ENCODE measurements at regions of chr7 and their contacts with region 1.

Region 1: GRCh38 chr7:100049441-100050311 is at the start of gene ZSCAN21:
- DNase-seq: peak; percentile 85
- H3K4me3 Mint-ChIP-seq: peak within 1 kb of the TSS; percentile 85
- H3K27ac Mint-ChIP-seq: peak within 1 kb of the TSS; percentile 91
- H3K4me1 Mint-ChIP-seq: peaks cover 17% of the 10 kb centered on the region
- H3K27me3 Mint-ChIP-seq: no peaks in the 10 kb centered on the region
- total RNA-seq, gene ZSCAN21: 6.2 to 6.4 TPM

Region 2: GRCh38 chr7:99997545-99998137 is 52.0 kb before region 1 on chr7:
- CTCF ChIA-PET with region 1: interaction called, 19 read pairs
- intact Hi-C with region 1: loop called (anchors 1 kb)
- DNase-seq: peak; percentile 78
- H3K4me3 Mint-ChIP-seq: peak overlapping the region; percentile 69
- H3K27ac Mint-ChIP-seq: peak overlapping the region; percentile 78
- H3K4me1 Mint-ChIP-seq: peaks cover 10% of the 10 kb centered on the region
- H3K27me3 Mint-ChIP-seq: no peaks in the 10 kb centered on the region

Region 3: DNA sequence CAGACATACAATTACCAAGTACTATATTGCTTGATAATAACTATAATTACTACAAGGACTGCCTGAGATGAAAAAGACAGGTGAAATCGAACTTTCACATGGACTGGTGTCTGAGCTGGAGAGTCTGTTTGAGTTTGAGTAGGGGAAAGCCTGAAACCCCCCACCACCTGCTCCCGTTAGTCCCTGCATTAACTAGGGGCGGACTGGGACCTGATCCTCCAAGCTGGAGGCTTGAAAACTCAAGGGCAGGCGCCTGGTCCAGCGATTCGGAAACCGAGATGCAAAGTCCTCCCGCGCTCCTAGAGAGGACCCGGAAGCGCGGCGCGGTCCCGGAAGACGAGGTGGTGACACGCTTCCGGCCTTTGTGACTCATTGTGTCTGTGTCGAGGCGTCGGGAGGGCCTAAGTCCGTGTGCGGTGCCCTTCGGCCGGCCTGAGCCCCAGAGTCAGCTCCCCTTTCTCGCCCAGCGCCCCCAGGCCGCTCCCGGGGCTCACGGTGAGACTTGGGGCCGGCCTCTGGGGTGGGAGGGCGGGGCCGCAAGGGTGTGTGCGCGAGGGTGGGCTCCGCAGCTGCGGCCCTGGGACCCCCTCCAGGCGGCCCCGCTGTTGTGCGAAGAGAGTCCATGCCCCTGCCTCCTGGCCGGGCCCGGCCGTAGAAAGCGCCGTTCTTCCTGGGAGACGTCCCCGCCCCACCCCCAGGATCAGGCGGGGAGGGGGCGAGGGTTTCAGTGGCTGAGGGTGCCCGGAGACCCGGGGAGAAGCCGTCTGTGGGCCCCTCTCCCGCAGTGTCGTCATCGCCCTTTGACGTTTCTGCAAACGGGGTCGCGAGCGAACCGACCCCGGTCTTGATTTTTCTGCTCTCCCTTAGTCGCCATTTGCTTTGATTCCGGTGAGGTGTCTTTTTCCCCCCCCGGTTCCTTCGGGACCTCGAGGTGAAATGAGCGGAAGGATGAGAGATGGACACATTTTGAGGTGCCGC is 34.2 kb before region 1 on chr7 and contains the start of gene ZKSCAN1:
- CTCF ChIA-PET with region 1: interaction called, 7 read pairs
- intact Hi-C with region 1: loop called (anchors 1 kb)
- DNase-seq: peak; percentile 89
- H3K4me3 Mint-ChIP-seq: peak within 1 kb of the TSS; percentile 88
- H3K27ac Mint-ChIP-seq: peak within 1 kb of the TSS; percentile 91
- H3K4me1 Mint-ChIP-seq: peaks cover 64% of the 10 kb centered on the region
- H3K27me3 Mint-ChIP-seq: no peaks in the 10 kb centered on the region
- total RNA-seq, gene ZKSCAN1: 64.4 to 67.9 TPM

Region 4: GRCh38 chr7:100126931-100127865 is 77.5 kb after region 1 on chr7 and contains the start of gene MBLAC1:
- CTCF ChIA-PET with region 1: interaction called, 3 read pairs
- intact Hi-C with region 1: loop called (anchors 2 kb)
- DNase-seq: peak; percentile 94
- H3K4me3 Mint-ChIP-seq: peak within 1 kb of the TSS; percentile 100
- H3K27ac Mint-ChIP-seq: peak within 1 kb of the TSS; percentile 99
- H3K4me1 Mint-ChIP-seq: peaks cover 30% of the 10 kb centered on the region
- H3K27me3 Mint-ChIP-seq: no peaks in the 10 kb centered on the region
- total RNA-seq, gene MBLAC1: 2.3 to 2.9 TPM

Measured in activated naive CD4-positive, alpha-beta T cell treated with anti-CD3 and anti-CD28 coated beads for 36 hours (primary cell).